Transverse colon (tissue), 4 donors: ENCODE measurements at regions of chr5 and their contacts with region 1.

Region 1: GRCh38 chr5:115625579-115626444 is at the start of gene TMED7:
- DNase-seq: peak; percentile 100
- H3K4me3 ChIP-seq: peak within 1 kb of the TSS; percentile 79 to 94 (median 81)
- H3K27ac ChIP-seq: peak within 1 kb of the TSS; percentile 95 to 98 (median 96)
- H3K4me1 ChIP-seq: peaks cover 13 to 47% (median 32%) of the 10 kb centered on the region in 4 donors
- H3K27me3 ChIP-seq: no peaks in the 10 kb centered on the region
- CTCF ChIP-seq: peak in 3 of 5 experiments; percentile 13 to 43 (median 33)
- EP300 ChIP-seq: peak; percentile 30
- POLR2A ChIP-seq: peak; percentile 88
- total RNA-seq, gene TMED7: 29.9 to 122 (median 98.2) TPM

Region 2: DNA sequence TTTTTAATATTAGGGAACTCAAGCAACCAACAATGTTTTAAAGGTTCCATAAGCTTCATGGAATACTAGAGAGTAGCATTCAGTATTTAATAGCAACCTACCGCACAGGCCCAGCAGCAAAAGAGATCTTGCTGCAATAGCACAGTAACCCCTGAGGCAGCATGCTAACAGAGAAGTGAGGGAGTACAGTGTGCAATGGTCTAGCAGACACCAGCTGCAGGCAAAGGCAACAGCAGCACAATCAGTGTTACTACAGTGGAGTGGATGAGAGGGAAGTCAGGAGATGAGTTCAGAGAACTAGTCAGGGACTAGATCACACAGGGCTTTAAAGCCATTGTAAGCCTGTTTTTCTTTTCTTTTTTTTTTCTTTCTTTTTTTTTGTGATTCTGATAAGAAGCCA is 26.3 kb before region 1 on chr5:
- in situ Hi-C with region 1: no loop called
- intact Hi-C with region 1: no loop called
- DNase-seq: no peak
- H3K4me3 ChIP-seq: no peak overlapping the region
- H3K27ac ChIP-seq: peak overlapping the region in 1 of 4 donors; percentile 41
- H3K4me1 ChIP-seq: peaks cover 3 to 32% (median 23%) of the 10 kb centered on the region in 4 donors
- H3K27me3 ChIP-seq: no peaks in the 10 kb centered on the region
- CTCF ChIP-seq: no peak
- EP300 ChIP-seq: no peak
- POLR2A ChIP-seq: no peak

Region 3: GRCh38 chr5:115831163-115831768 is 205.5 kb after region 1 on chr5:
- in situ Hi-C with region 1: loop called in 1 of 4 experiments (anchors 10 kb)
- intact Hi-C with region 1: no loop called
- DNase-seq: peak; percentile 15
- H3K4me3 ChIP-seq: no peak overlapping the region
- H3K27ac ChIP-seq: no peak overlapping the region
- H3K4me1 ChIP-seq: peaks cover 0 to 7% (median 2%) of the 10 kb centered on the region in 4 donors
- H3K27me3 ChIP-seq: no peaks in the 10 kb centered on the region
- CTCF ChIP-seq: peak; percentile 54 to 72 (median 65)
- EP300 ChIP-seq: no peak
- POLR2A ChIP-seq: no peak

Region 4: GRCh38 chr5:116076496-116076895 is 450.7 kb after region 1 on chr5:
- in situ Hi-C with region 1: loop called in 1 of 4 experiments (anchors 10 kb)
- intact Hi-C with region 1: no loop called
- DNase-seq: no peak
- H3K4me3 ChIP-seq: no peak overlapping the region
- H3K27ac ChIP-seq: no peak overlapping the region
- H3K4me1 ChIP-seq: peaks cover 0 to 3% (median 0%) of the 10 kb centered on the region in 4 donors
- H3K27me3 ChIP-seq: no peaks in the 10 kb centered on the region
- CTCF ChIP-seq: no peak
- EP300 ChIP-seq: no peak
- POLR2A ChIP-seq: no peak